Activated T-helper 2 cell treated with anti-CD3 and anti-CD28 coated beads, Interferon-gamma antibody, Interleukin-2, Interleukin-4, amounts not matched to agents 10 μg/mL and 5 μg/mL and 100 μg/mL, durations not matched to agents 14 hours and 24 hours and 36 hours (primary cell): ENCODE measurements at regions of chr4 and their contacts with region 1.

Region 1: DNA sequence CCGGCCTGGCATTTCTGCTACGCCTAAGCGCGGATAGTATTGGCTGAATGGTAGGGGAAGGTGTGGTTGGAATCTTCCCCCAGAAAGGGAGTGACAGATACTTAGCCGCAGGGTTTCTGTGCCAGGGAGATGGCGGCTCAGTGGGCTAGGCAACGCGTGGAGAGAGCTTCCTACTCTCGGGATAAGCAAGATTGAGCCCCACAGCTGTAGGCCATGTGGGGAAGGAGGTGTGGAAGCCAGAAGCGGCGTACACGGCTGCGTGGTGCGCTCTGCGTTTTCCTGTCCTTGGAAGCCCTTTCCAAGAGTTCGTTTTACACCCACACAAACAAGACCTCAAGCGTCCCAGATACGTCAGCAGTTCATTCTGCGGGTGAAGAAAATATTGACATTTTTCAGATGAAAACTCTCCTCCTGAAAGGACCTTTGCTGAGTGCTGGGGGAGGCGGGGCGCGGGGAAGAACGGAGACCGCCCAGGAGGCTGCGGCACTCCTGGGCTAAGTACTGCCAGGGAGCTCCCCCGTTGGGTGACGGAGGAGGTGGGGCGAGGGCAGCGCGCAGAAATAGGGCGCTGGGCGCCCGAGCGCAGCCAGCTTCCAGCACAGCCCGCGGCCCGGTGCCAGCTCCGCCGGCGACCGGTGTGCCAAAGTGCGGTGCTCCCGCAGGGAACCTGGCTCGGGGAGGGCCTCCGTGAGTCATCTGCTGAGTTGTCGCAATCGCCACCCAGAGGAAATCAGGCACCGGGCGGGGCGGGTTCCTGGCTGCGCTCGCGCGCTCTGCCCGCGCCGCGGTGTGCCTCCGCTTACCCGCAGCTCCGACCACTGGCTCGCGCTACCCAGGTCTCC is at the start of gene GPAT3:
- DNase-seq: peak; percentile 65
- H3K4me3 Mint-ChIP-seq: peak within 1 kb of the TSS; percentile 78
- H3K27ac Mint-ChIP-seq: peak within 1 kb of the TSS; percentile 54
- H3K4me1 Mint-ChIP-seq: peaks cover 22% of the 10 kb centered on the region
- H3K27me3 Mint-ChIP-seq: peaks cover 49% of the 10 kb centered on the region
- total RNA-seq, gene GPAT3: 8.8 and 9.7 TPM in 2 replicates

Region 2: GRCh38 chr4:83484500-83485461 is 51.0 kb before region 1 on chr4 and contains the start of gene ABRAXAS1:
- intact Hi-C with region 1: loop called (anchors 2 kb)
- DNase-seq: peak; percentile 93
- H3K4me3 Mint-ChIP-seq: peak within 1 kb of the TSS; percentile 95
- H3K27ac Mint-ChIP-seq: peak within 1 kb of the TSS; percentile 96
- H3K4me1 Mint-ChIP-seq: peaks cover 14% of the 10 kb centered on the region
- H3K27me3 Mint-ChIP-seq: no peaks in the 10 kb centered on the region
- total RNA-seq, gene ABRAXAS1: 15.7 and 16.0 TPM in 2 replicates

Region 3: DNA sequence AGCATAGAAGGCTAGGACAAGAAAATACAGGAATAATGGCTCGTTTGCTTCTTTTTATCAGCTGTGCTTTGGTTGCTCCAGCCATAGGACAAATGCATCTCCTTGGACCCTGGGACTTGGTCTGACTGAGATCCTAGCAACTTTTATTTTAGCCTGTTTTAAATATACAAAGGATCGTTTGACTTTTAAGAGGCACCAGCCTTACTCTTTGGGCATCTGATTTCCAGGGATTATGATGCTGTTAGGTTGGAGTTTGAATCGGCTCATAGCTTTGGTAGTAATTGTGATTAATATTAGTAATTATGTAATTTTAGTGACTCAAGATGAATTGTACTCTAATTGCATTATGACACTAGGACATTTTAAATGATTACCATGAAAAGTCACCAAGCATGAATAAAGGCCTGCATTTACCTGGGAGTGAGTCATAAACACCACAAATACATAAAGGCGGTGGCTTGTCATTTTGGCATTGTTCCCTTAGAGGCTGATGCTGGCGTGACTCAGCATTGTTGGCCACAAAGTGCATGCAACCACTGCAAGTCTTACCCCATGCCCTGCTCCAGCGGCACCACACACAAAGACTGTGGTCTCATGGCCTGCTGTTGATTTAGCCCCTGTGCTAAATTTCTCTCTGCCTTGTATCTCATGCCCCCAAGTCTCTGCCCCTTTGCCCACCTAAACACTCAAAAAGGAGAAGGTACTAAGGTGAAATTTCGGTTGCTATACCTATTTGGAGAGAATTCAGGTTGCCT is 12.6 kb after region 1 on chr4:
- intact Hi-C with region 1: loop called (anchors 1 kb)
- DNase-seq: peak; percentile 68
- H3K4me3 Mint-ChIP-seq: no peak overlapping the region
- H3K27ac Mint-ChIP-seq: no peak overlapping the region
- H3K4me1 Mint-ChIP-seq: peaks cover 34% of the 10 kb centered on the region
- H3K27me3 Mint-ChIP-seq: peaks cover 1% of the 10 kb centered on the region